Body of pancreas (tissue), 4 donors: ENCODE measurements at regions of chr3 and their contacts with region 1.

Region 1: GRCh38 chr3:14921078-14921616 is 26.2 kb upstream of the NR2C2 start:
- DNase-seq: peak; percentile 89 to 95 (median 90)
- ATAC-seq: peak; percentile 96
- H3K4me3 ChIP-seq: no peak overlapping the region
- H3K27ac ChIP-seq: no peak overlapping the region
- H3K4me1 ChIP-seq: no peaks in the 10 kb centered on the region
- H3K27me3 ChIP-seq: no peaks in the 10 kb centered on the region
- CTCF ChIP-seq: peak; percentile 93 to 99 (median 97)
- POLR2A ChIP-seq: no peak

Region 2: DNA sequence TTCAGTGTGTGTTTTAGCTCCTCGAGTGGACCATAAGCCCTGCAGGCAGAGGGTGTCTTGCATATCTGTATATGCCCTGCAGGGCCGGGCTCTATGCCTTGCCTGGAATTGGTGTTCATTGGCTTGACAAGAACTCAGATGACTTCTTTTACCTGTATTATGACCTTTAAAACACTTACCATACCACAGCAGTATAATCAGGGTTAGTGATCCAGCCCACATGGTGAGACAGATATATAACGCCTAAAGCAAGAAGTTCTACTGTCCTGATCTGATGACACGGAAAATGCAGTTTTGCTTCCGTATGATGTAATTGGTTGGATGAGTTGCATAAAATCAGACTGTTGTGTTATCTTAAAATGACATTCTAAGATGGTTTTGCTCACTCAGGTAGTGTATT is 260.2 kb before region 1 on chr3:
- intact Hi-C with region 1: loop called (anchors 10 kb)
- DNase-seq: no peak
- ATAC-seq: no peak
- H3K4me3 ChIP-seq: no peak overlapping the region
- H3K27ac ChIP-seq: no peak overlapping the region
- H3K4me1 ChIP-seq: peaks cover 11% of the 10 kb centered on the region
- H3K27me3 ChIP-seq: no peaks in the 10 kb centered on the region
- CTCF ChIP-seq: no peak
- POLR2A ChIP-seq: no peak

Region 3: DNA sequence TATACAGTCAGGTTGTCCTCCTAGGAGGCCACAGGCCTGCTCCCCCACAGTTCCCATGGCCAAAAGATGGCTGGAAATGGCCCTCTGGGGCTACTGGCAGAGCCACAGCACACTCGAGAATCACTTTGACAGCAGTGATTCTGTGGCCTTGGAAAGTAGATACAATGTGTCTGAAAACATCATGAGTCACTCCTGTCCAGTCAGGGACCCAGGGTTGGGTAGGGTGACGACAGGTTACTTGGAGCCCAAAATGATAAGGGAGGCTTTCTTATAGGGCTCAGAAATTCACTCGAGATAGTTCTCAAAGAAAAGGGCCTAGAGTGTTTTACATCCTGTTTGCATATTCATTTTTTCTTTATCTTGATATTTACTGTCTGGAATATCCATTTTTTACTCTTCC is 119.7 kb after region 1 on chr3:
- intact Hi-C with region 1: no loop called
- DNase-seq: no peak
- ATAC-seq: no peak
- H3K4me3 ChIP-seq: no peak overlapping the region
- H3K27ac ChIP-seq: no peak overlapping the region
- H3K4me1 ChIP-seq: no peaks in the 10 kb centered on the region
- H3K27me3 ChIP-seq: no peaks in the 10 kb centered on the region
- CTCF ChIP-seq: no peak
- POLR2A ChIP-seq: no peak